Caco-2 (cell line): ENCODE measurements at regions of chr1 and their contacts with region 1.

Region 1: GRCh38 chr1:111507411-111508201 is 4.2 kb upstream of the ADORA3 start:
- DNase-seq: peak; percentile 74
- H3K4me3 ChIP-seq: peak overlapping the region; percentile 36
- H3K4me3 Mint-ChIP-seq: peak overlapping the region; percentile 73
- H3K27ac Mint-ChIP-seq: peak overlapping the region; percentile 94
- H3K4me1 ChIP-seq: peaks cover 28% of the 10 kb centered on the region
- H3K4me1 Mint-ChIP-seq: peaks cover 13% of the 10 kb centered on the region
- H3K27me3 ChIP-seq: no peaks in the 10 kb centered on the region
- H3K27me3 Mint-ChIP-seq: no peaks in the 10 kb centered on the region
- CTCF ChIP-seq: peak in 1 of 2 experiments; percentile 30

Region 2: GRCh38 chr1:111481387-111482221 is 26.0 kb before region 1 on chr1:
- CTCF ChIA-PET with region 1: interaction called, 27 read pairs
- POLR2A ChIA-PET with region 1: no interaction called
- intact Hi-C with region 1: loop called (anchors 1 kb)
- DNase-seq: peak; percentile 78 to 83
- H3K4me3 ChIP-seq: no peak overlapping the region
- H3K4me3 Mint-ChIP-seq: no peak overlapping the region
- H3K27ac Mint-ChIP-seq: no peak overlapping the region
- H3K4me1 ChIP-seq: no peaks in the 10 kb centered on the region
- H3K4me1 Mint-ChIP-seq: no peaks in the 10 kb centered on the region
- H3K27me3 ChIP-seq: no peaks in the 10 kb centered on the region
- H3K27me3 Mint-ChIP-seq: no peaks in the 10 kb centered on the region
- CTCF ChIP-seq: peak; percentile 63 to 75

Region 3: GRCh38 chr1:111535256-111536191 is 27.9 kb after region 1 on chr1:
- CTCF ChIA-PET with region 1: no interaction called
- POLR2A ChIA-PET with region 1: no interaction called
- intact Hi-C with region 1: no loop called
- DNase-seq: no peak
- H3K4me3 ChIP-seq: no peak overlapping the region
- H3K4me3 Mint-ChIP-seq: no peak overlapping the region
- H3K27ac Mint-ChIP-seq: no peak overlapping the region
- H3K4me1 ChIP-seq: no peaks in the 10 kb centered on the region
- H3K4me1 Mint-ChIP-seq: peaks cover 5% of the 10 kb centered on the region
- H3K27me3 ChIP-seq: no peaks in the 10 kb centered on the region
- H3K27me3 Mint-ChIP-seq: no peaks in the 10 kb centered on the region
- CTCF ChIP-seq: no peak

Region 4: DNA sequence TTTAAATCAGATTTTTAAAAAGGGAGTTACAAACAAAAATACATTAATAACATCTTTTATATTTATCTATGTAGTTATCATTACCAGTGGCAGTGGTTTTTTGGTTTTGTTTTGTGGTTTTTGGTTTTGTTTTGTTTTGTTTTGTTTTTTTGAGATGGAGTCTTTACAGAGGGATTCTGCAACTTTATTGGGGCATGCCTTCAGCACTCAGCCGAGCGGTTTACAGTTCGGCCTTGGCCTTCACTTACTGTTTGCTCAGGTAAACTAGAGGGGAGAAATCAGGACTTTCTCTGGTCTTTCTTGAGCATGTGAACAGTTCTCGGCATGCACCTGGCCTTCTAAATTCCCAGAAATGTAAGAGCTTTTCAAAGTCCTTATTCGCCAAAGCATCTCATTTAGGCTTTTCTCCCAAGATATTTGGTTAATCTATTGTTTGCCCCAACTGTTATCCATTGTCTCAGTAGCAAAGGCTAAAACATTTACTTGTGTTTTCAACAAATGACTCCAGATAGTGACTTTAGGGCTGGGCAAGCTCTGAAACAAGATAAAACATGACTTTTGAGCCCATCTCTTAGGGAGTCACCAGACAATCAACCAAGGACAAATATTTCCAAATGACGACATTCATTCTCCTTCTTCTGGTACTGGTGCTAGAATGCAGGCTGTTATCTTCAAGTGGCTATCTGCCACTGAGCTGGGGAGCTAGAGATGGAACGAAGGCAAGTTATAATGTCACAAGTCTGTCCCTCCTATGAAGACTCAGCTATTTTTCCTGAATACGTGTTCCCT is 44.2 kb after region 1 on chr1:
- CTCF ChIA-PET with region 1: interaction called, 5 read pairs
- POLR2A ChIA-PET with region 1: no interaction called
- intact Hi-C with region 1: loop called (anchors 1 kb)
- DNase-seq: peak; percentile 47 to 53
- H3K4me3 ChIP-seq: no peak overlapping the region
- H3K4me3 Mint-ChIP-seq: peak overlapping the region; percentile 58
- H3K27ac Mint-ChIP-seq: peak overlapping the region; percentile 58
- H3K4me1 ChIP-seq: peaks cover 49% of the 10 kb centered on the region
- H3K4me1 Mint-ChIP-seq: peaks cover 20% of the 10 kb centered on the region
- H3K27me3 ChIP-seq: no peaks in the 10 kb centered on the region
- H3K27me3 Mint-ChIP-seq: no peaks in the 10 kb centered on the region
- CTCF ChIP-seq: no peak

Region 5: DNA sequence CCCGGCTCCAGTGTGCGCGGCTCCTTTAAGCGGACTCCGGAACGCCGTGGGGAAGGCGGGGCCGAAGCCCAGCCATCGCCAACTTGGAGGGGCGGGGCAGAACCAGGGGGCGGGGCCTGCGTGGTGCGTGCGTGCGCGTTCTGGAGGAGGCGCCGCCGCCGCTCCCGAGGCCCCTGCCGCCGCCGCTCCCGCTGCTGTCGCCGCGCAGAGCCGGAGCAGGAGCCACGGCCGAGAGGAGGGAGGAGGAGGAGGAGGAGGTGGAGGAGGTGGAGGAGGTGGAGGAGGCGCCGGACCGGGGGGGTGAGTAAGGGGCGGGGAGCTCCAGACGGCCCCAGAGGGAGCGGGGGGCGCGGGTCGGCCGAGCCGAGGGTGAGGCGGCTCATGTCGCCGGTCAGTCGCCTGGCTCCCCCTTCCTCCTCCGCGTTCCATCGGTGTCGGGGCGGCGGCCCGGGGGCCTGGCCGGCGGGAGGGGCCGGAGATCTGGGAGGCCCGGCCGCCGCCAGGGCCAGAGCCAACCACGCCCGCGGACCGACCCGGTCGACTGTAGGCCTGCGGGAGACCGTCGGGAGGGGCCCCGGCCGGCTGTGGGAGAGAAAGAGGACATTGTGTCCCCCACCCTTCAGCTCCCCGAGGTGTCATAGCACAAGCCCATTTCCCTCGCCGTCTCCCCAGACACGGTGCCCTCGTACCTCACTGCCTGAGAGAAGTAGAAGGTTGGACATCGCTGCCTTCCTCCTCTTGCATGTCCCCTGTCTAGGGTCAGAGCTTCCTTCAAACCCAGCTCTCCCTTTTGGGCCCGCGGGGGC is 112.2 kb after region 1 on chr1 and contains the start of gene RAP1A:
- CTCF ChIA-PET with region 1: interaction called, 8 read pairs
- POLR2A ChIA-PET with region 1: interaction called, 7 read pairs
- intact Hi-C with region 1: loop called (anchors 1 kb)
- DNase-seq: peak; percentile 90 to 91
- H3K4me3 ChIP-seq: peak within 1 kb of the TSS; percentile 73
- H3K4me3 Mint-ChIP-seq: peak within 1 kb of the TSS; percentile 97
- H3K27ac Mint-ChIP-seq: peak within 1 kb of the TSS; percentile 70
- H3K4me1 ChIP-seq: peaks cover 15% of the 10 kb centered on the region
- H3K4me1 Mint-ChIP-seq: peaks cover 27% of the 10 kb centered on the region
- H3K27me3 ChIP-seq: no peaks in the 10 kb centered on the region
- H3K27me3 Mint-ChIP-seq: no peaks in the 10 kb centered on the region
- CTCF ChIP-seq: no peak
- total RNA-seq, gene RAP1A: 60.1 and 64.1 TPM in 2 replicates

Region 6: GRCh38 chr1:111747282-111747734 is 239.7 kb after region 1 on chr1:
- CTCF ChIA-PET with region 1: interaction called, 11 read pairs
- POLR2A ChIA-PET with region 1: no interaction called
- intact Hi-C with region 1: no loop called
- DNase-seq: peak; percentile 76 to 80
- H3K4me3 ChIP-seq: no peak overlapping the region
- H3K4me3 Mint-ChIP-seq: no peak overlapping the region
- H3K27ac Mint-ChIP-seq: no peak overlapping the region
- H3K4me1 ChIP-seq: no peaks in the 10 kb centered on the region
- H3K4me1 Mint-ChIP-seq: no peaks in the 10 kb centered on the region
- H3K27me3 ChIP-seq: no peaks in the 10 kb centered on the region
- H3K27me3 Mint-ChIP-seq: no peaks in the 10 kb centered on the region
- CTCF ChIP-seq: peak; percentile 60 to 74